Activated CD4-positive, alpha-beta T cell treated with anti-CD3 and anti-CD28 coated beads, Interleukin-2, amount 10 ng/mL, durations not matched to agents 24 days and 14 days (primary cell): ENCODE measurements at regions of chr9 and their contacts with region 1.

Region 1: GRCh38 chr9:22079873-22080341 is 70.8 kb upstream of the CDKN2B start:
- DNase-seq: peak; percentile 91
- H3K4me3 Mint-ChIP-seq: peak overlapping the region; percentile 56
- H3K27ac Mint-ChIP-seq: peak overlapping the region; percentile 68
- H3K4me1 Mint-ChIP-seq: peaks cover 48% of the 10 kb centered on the region
- H3K27me3 Mint-ChIP-seq: peaks cover 49% of the 10 kb centered on the region

Region 2: GRCh38 chr9:21357479-21358460 is 722.1 kb before region 1 on chr9:
- intact Hi-C with region 1: loop called (anchors 5 kb)
- DNase-seq: peak; percentile 77
- H3K4me3 Mint-ChIP-seq: peak overlapping the region; percentile 58
- H3K27ac Mint-ChIP-seq: peak overlapping the region; percentile 83
- H3K4me1 Mint-ChIP-seq: peaks cover 14% of the 10 kb centered on the region
- H3K27me3 Mint-ChIP-seq: peaks cover 50% of the 10 kb centered on the region

Region 3: GRCh38 chr9:21831961-21832509 is 247.9 kb before region 1 on chr9:
- intact Hi-C with region 1: loop called (anchors 1 kb)
- DNase-seq: peak; percentile 84
- H3K4me3 Mint-ChIP-seq: peak overlapping the region; percentile 15
- H3K27ac Mint-ChIP-seq: peak overlapping the region; percentile 29
- H3K4me1 Mint-ChIP-seq: peaks cover 57% of the 10 kb centered on the region
- H3K27me3 Mint-ChIP-seq: no peaks in the 10 kb centered on the region

Region 4: GRCh38 chr9:22037954-22038690 is 41.8 kb before region 1 on chr9:
- intact Hi-C with region 1: loop called (anchors 2 kb)
- DNase-seq: no peak
- H3K4me3 Mint-ChIP-seq: no peak overlapping the region
- H3K27ac Mint-ChIP-seq: no peak overlapping the region
- H3K4me1 Mint-ChIP-seq: peaks cover 26% of the 10 kb centered on the region
- H3K27me3 Mint-ChIP-seq: peaks cover 34% of the 10 kb centered on the region

Region 5: DNA sequence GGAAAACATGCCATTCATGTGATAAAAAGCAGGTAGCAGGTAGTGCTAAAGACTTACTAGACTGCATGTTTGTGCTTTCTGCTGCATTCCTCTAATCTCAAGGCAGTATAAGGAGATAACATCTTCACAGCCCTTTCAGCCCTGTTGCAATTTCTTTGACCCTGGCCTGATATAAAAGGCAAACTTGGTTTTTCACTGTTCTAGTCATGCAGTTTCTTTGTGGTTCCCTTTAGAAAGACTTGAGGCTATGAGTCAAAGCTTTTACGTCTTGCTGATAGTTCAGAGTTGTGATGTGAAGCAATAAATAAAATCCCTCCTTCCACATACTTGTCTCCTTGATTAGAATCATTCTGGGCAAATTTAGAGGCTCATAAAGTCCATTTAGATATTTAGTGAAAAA is 17.8 kb after region 1 on chr9:
- intact Hi-C with region 1: loop called (anchors 1 kb)
- DNase-seq: no peak
- H3K4me3 Mint-ChIP-seq: no peak overlapping the region
- H3K27ac Mint-ChIP-seq: no peak overlapping the region
- H3K4me1 Mint-ChIP-seq: peaks cover 24% of the 10 kb centered on the region
- H3K27me3 Mint-ChIP-seq: peaks cover 59% of the 10 kb centered on the region

Region 6: GRCh38 chr9:22147813-22148524 is 68.1 kb after region 1 on chr9:
- intact Hi-C with region 1: loop called (anchors 1 kb)
- DNase-seq: peak; percentile 75
- H3K4me3 Mint-ChIP-seq: no peak overlapping the region
- H3K27ac Mint-ChIP-seq: no peak overlapping the region
- H3K4me1 Mint-ChIP-seq: peaks cover 22% of the 10 kb centered on the region
- H3K27me3 Mint-ChIP-seq: peaks cover 37% of the 10 kb centered on the region

Region 7: GRCh38 chr9:22354699-22355384 is 274.9 kb after region 1 on chr9:
- intact Hi-C with region 1: no loop called
- DNase-seq: no peak
- H3K4me3 Mint-ChIP-seq: no peak overlapping the region
- H3K27ac Mint-ChIP-seq: no peak overlapping the region
- H3K4me1 Mint-ChIP-seq: no peaks in the 10 kb centered on the region
- H3K27me3 Mint-ChIP-seq: no peaks in the 10 kb centered on the region